Psoas muscle (tissue), 8 donors: ENCODE measurements at regions of chr7 and their contacts with region 1.

Region 1: DNA sequence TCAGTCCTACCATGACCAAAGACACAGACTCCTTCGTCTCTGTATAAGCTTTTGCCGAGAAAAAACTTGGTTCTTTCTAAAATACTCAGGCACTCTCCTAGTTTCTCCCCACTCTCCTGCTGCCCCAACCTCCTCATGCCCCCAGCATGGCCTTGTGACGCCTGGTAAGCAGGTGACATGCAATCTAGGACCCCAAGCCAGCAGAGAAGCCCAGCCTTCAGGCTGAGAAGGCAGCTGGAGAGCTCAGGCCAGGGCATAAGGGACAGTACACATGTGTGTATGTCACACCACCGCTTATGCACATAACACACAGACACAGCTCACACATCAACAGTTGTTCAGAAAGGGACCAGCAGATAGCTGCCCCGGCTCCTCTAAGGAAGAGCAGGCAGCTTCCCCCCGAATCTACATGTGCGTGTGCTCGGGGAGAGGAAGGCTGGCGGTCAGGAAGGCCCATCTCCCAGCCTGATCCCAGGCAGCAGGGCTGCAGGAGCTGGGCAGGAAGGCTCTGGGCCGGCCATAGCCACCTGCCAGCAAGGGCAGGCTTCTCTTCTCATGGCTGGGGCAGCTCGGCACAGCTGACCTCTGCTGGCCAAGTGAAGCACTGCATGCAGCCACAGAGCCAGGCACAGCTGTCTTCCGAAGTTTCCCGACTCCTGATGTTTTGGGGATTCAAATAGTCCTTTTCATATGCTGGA is 8.5 kb downstream of the DDX56 start:
- DNase-seq: peak; percentile 71 to 87
- ATAC-seq: peak; percentile 90 to 95 (median 92)
- H3K4me3 ChIP-seq: no peak overlapping the region
- H3K27ac ChIP-seq: peak overlapping the region; percentile 7
- H3K4me1 ChIP-seq: peaks cover 7% of the 10 kb centered on the region
- H3K27me3 ChIP-seq: no peaks in the 10 kb centered on the region
- CTCF ChIP-seq: peak; percentile 98

Region 2: GRCh38 chr7:44240983-44241510 is 324.2 kb before region 1 on chr7:
- intact Hi-C with region 1: loop called in 1 of 2 experiments (anchors 5 kb)
- DNase-seq: peak; percentile 74 to 87
- ATAC-seq: peak; percentile 89 to 96 (median 92)
- H3K4me3 ChIP-seq: no peak overlapping the region
- H3K27ac ChIP-seq: no peak overlapping the region
- H3K4me1 ChIP-seq: peaks cover 7% of the 10 kb centered on the region
- H3K27me3 ChIP-seq: no peaks in the 10 kb centered on the region
- CTCF ChIP-seq: peak; percentile 67

Region 3: GRCh38 chr7:44322631-44323363 is 242.4 kb before region 1 on chr7:
- intact Hi-C with region 1: no loop called
- DNase-seq: peak; percentile 86 to 96
- ATAC-seq: peak; percentile 83 to 86 (median 84)
- H3K4me3 ChIP-seq: peak overlapping the region; percentile 74
- H3K27ac ChIP-seq: peak overlapping the region; percentile 98
- H3K4me1 ChIP-seq: peaks cover 56% of the 10 kb centered on the region
- H3K27me3 ChIP-seq: peaks cover 0 to 11% (median 0%) of the 10 kb centered on the region in 3 donors
- CTCF ChIP-seq: no peak

Region 4: GRCh38 chr7:44375236-44375699 is 190.0 kb before region 1 on chr7:
- intact Hi-C with region 1: loop called (anchors 10 kb)
- DNase-seq: peak; percentile 59 to 81
- ATAC-seq: peak; percentile 89 to 90 (median 90)
- H3K4me3 ChIP-seq: no peak overlapping the region
- H3K27ac ChIP-seq: no peak overlapping the region
- H3K4me1 ChIP-seq: peaks cover 3% of the 10 kb centered on the region
- H3K27me3 ChIP-seq: no peaks in the 10 kb centered on the region
- CTCF ChIP-seq: peak; percentile 67

Region 5: GRCh38 chr7:44498230-44498954 is 66.9 kb before region 1 on chr7:
- intact Hi-C with region 1: loop called in 1 of 2 experiments (anchors 5 kb)
- DNase-seq: no peak
- ATAC-seq: peak; percentile 96 to 99 (median 97)
- H3K4me3 ChIP-seq: no peak overlapping the region
- H3K27ac ChIP-seq: peak overlapping the region; percentile 71
- H3K4me1 ChIP-seq: peaks cover 14% of the 10 kb centered on the region
- H3K27me3 ChIP-seq: no peaks in the 10 kb centered on the region
- CTCF ChIP-seq: no peak